ENCODE measurements at regions of chr16 and their contacts with region 1.

Region 1: GRCh38 chr16:23435500-23435899 is 17.5 kb downstream of the COG7 start:
- DNase-seq: peak; percentile 34 to 82
- H3K4me3 ChIP-seq: no peak overlapping the region
- H3K27ac ChIP-seq: no peak overlapping the region
- H3K4me1 ChIP-seq: no peaks in the 10 kb centered on the region
- H3K27me3 ChIP-seq: no peaks in the 10 kb centered on the region
- CTCF ChIP-seq: peak; percentile 77 to 98 (median 92)
- EP300 ChIP-seq: no peak
- POLR2A ChIP-seq: no peak
- RAD21 ChIP-seq: peak; percentile 73 to 76

Region 2: DNA sequence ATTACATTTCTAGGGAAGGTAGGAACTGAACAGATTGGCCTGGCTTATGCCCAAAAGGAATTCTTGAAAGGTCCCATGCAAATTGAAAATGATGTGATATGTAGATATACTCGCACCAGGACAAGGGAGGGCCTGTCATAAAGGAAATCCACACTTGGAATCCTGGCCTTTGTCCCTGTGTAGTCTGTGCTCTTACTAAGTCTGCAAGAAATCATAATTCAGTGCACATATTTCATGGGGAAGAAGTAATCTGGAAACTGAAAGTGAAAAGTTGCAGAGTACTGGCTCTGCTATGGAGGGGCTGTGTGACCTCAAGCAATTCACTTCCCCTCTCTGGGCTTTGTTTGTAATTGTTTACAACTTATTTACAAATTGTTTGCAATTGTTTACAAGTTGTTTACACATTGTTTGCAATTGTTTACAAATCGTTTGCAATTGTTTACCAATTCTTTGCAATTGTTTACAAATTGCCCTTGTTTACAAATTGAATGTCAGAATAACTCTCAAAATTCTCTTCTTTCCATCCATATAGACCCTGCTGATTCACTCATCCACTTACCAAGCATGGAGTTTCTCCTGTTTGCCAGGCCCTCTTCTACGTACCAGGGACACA is 240.0 kb before region 1 on chr16:
- CTCF ChIA-PET with region 1: interaction called, 21 read pairs
- POLR2A ChIA-PET with region 1: no interaction called
- DNase-seq: no peak
- H3K4me3 ChIP-seq: no peak overlapping the region
- H3K27ac ChIP-seq: no peak overlapping the region
- H3K4me1 ChIP-seq: peaks cover 5 to 20% (median 11%) of the 10 kb centered on the region in 4 experiments; a peak in 6 of 7 replicates
- H3K27me3 ChIP-seq: no peaks in the 10 kb centered on the region
- CTCF ChIP-seq: no peak
- EP300 ChIP-seq: no peak
- POLR2A ChIP-seq: no peak
- RAD21 ChIP-seq: no peak

Region 3: DNA sequence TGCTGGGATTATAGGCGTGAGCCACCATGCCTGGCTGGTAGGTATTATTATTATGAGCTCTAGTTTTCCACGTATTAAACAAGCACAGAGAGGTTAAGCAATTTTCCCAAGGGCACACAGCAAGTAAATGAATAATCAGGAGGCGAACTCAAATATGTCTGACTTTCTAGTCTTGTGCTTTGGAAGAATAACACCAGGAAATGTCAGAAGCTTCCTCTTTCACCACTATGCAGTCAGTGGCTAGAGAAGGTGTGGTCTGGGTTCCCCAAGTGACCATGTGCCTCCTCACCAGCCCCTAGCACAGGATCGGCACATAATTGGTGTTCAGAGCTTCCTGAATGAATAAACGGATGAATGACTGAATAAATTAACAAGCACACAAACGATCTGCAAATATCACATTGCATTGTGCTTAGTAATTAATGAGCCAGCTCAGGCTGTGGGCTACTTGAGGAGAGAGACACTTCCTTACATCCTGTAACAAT is 155.0 kb before region 1 on chr16:
- CTCF ChIA-PET with region 1: interaction called, 13 read pairs
- POLR2A ChIA-PET with region 1: no interaction called
- DNase-seq: no peak
- H3K4me3 ChIP-seq: no peak overlapping the region
- H3K27ac ChIP-seq: no peak overlapping the region
- H3K4me1 ChIP-seq: peaks cover 0 to 6% (median 0%) of the 10 kb centered on the region in 4 experiments; a peak in 3 of 7 replicates
- H3K27me3 ChIP-seq: no peaks in the 10 kb centered on the region
- CTCF ChIP-seq: no peak
- EP300 ChIP-seq: no peak
- POLR2A ChIP-seq: no peak
- RAD21 ChIP-seq: no peak

Region 4: DNA sequence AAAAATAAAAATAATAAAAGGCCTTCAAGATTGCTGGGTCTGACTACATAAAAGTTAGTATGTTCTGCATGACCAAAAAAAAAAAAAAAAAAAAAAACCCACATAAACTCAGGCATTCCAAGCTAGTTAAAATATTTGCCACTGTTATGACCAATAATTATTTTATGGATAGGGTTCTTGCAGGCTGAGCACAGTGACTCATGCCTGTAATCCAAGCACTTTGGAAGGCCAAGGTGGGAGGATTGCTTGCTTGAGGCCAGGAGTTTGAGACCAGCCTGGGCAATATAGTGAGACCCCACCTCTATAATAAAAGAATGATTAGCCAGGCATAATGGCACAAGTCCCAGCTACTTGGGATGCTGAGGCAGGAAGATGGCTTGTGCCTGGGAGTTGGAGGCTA is 125.3 kb before region 1 on chr16:
- CTCF ChIA-PET with region 1: interaction called, 47 read pairs
- POLR2A ChIA-PET with region 1: no interaction called
- DNase-seq: no peak
- H3K4me3 ChIP-seq: no peak overlapping the region
- H3K27ac ChIP-seq: no peak overlapping the region
- H3K4me1 ChIP-seq: no peaks in the 10 kb centered on the region
- H3K27me3 ChIP-seq: no peaks in the 10 kb centered on the region
- CTCF ChIP-seq: no peak
- EP300 ChIP-seq: no peak
- POLR2A ChIP-seq: no peak
- RAD21 ChIP-seq: no peak

Region 5: DNA sequence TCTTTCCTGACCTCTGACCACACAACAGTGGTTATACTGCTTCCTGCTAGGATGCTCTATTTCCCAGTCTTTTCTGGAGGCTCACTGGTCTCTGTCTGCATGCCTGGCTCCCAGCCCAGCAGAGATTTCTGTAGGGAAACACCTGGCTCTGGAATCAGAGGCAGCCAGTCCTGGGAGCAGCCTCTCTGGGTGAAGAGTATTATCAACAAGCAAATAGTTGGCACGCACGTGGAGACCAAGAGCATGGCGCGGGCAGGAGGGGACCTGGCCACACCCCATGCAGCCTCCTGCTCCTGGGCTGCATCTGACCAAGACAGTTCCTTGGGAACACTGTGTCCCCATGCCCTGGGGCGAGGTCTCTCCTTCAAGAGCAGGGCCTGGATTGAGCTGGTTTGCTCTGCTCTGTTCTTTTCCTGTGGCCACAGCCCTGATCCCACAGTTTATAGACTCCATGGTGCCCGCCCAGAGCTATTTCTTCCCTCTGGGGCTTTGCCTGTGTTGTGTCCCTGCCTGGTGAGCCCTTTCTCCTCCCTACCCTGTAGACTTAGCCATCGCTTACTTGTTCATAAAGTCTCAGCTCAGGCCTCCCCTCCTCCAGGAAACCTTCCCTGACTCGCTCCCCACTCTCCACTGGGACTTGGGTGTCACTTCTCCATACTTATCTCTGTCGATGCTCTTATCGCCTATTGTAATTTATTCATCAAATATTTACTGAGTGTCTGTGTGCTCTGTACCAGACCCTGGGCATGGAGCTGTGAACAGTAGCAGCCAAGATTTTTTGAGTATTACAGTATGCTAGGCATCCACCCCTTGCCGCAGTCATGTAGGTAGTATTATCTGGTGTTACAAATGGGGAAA is 72.8 kb before region 1 on chr16:
- CTCF ChIA-PET with region 1: interaction called, 23 read pairs
- POLR2A ChIA-PET with region 1: no interaction called
- DNase-seq: no peak
- H3K4me3 ChIP-seq: no peak overlapping the region
- H3K27ac ChIP-seq: no peak overlapping the region
- H3K4me1 ChIP-seq: 0 out of 7 replicates have a peak, but pooled peaks cover 0 to 2% (median 0%) of the 10 kb centered on the region in 4 experiments
- H3K27me3 ChIP-seq: no peaks in the 10 kb centered on the region
- CTCF ChIP-seq: no peak
- EP300 ChIP-seq: no peak
- POLR2A ChIP-seq: no peak
- RAD21 ChIP-seq: no peak

Region 6: GRCh38 chr16:23398987-23399805 is 36.3 kb before region 1 on chr16:
- CTCF ChIA-PET with region 1: interaction called, 53 read pairs
- POLR2A ChIA-PET with region 1: interaction called, 3 read pairs
- DNase-seq: peak; percentile 47 to 68
- H3K4me3 ChIP-seq: peak overlapping the region in 3 of 4 experiments; percentile 4 to 37 (median 19); a peak in 3 of 8 replicates
- H3K27ac ChIP-seq: peak overlapping the region; percentile 40
- H3K4me1 ChIP-seq: peaks cover 3 to 23% (median 17%) of the 10 kb centered on the region in 4 experiments
- H3K27me3 ChIP-seq: no peaks in the 10 kb centered on the region
- CTCF ChIP-seq: peak; percentile 10 to 17 (median 14)
- EP300 ChIP-seq: no peak; a peak in 1 of 3 replicates
- POLR2A ChIP-seq: peak in 1 of 2 experiments; percentile 44; a peak in 1 of 3 replicates
- RAD21 ChIP-seq: peak; percentile 11 to 26; a peak in 2 of 4 replicates

Region 7: GRCh38 chr16:23423496-23424049 is 11.9 kb before region 1 on chr16:
- CTCF ChIA-PET with region 1: interaction called, 49 read pairs
- POLR2A ChIA-PET with region 1: interaction called, 4 read pairs
- DNase-seq: no peak
- H3K4me3 ChIP-seq: no peak overlapping the region
- H3K27ac ChIP-seq: no peak overlapping the region
- H3K4me1 ChIP-seq: peaks cover 0 to 2% (median 0%) of the 10 kb centered on the region in 4 experiments; a peak in 1 of 7 replicates
- H3K27me3 ChIP-seq: no peaks in the 10 kb centered on the region
- CTCF ChIP-seq: no peak
- EP300 ChIP-seq: no peak
- POLR2A ChIP-seq: no peak
- RAD21 ChIP-seq: no peak

Region 8: DNA sequence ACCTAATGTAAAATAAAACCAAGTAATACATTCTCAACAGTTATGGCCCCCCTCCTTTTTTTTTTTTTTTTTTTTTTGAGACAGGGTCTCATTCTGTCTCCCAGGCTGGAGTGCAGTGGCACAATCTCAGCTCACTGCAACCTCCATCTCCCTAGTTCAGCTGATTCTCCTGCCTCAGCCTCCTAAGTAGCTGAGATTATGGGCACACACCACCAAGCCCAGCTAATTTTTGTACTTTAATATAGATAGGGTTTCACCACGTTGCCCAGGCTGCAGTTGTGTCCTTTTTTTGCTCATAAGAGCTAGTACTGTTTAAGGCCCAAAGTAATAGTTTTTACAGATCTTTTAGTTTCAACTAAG is 103.4 kb after region 1 on chr16:
- CTCF ChIA-PET with region 1: no interaction called
- POLR2A ChIA-PET with region 1: no interaction called
- DNase-seq: no peak
- H3K4me3 ChIP-seq: no peak overlapping the region
- H3K27ac ChIP-seq: no peak overlapping the region
- H3K4me1 ChIP-seq: no peaks in the 10 kb centered on the region
- H3K27me3 ChIP-seq: no peaks in the 10 kb centered on the region
- CTCF ChIP-seq: no peak
- EP300 ChIP-seq: no peak
- POLR2A ChIP-seq: no peak
- RAD21 ChIP-seq: no peak